Heart left ventricle (tissue), 16 donors: ENCODE measurements at regions of chr3 and their contacts with region 1.

Region 1: GRCh38 chr3:134373994-134374790 is at the start of gene AMOTL2:
- DNase-seq: peak; percentile 92
- ATAC-seq: peak; percentile 62 to 85 (median 82)
- H3K4me3 ChIP-seq: peak within 1 kb of the TSS; percentile 61 to 98 (median 76)
- H3K27ac ChIP-seq: peak within 1 kb of the TSS; percentile 96 to 100 (median 98)
- H3K4me1 ChIP-seq: peaks cover 21 to 63% (median 47%) of the 10 kb centered on the region in 12 donors
- H3K27me3 ChIP-seq: peaks cover 0 to 17% (median 0%) of the 10 kb centered on the region in 9 donors
- CTCF ChIP-seq: no peak
- POLR2A ChIP-seq: peak in 1 of 2 donors; percentile 96
- total RNA-seq, gene AMOTL2: 26.0 to 109 (median 50.0) TPM

Region 2: GRCh38 chr3:134197681-134198261 is 176.4 kb before region 1 on chr3:
- intact Hi-C with region 1: loop called in 1 of 10 experiments (anchors 5 kb)
- DNase-seq: no peak
- ATAC-seq: peak; percentile 52 to 82 (median 80)
- H3K4me3 ChIP-seq: no peak overlapping the region
- H3K27ac ChIP-seq: no peak overlapping the region
- H3K4me1 ChIP-seq: peaks cover 0 to 8% (median 0%) of the 10 kb centered on the region in 12 donors
- H3K27me3 ChIP-seq: no peaks in the 10 kb centered on the region
- CTCF ChIP-seq: peak; percentile 58 to 84 (median 71)
- POLR2A ChIP-seq: no peak

Region 3: DNA sequence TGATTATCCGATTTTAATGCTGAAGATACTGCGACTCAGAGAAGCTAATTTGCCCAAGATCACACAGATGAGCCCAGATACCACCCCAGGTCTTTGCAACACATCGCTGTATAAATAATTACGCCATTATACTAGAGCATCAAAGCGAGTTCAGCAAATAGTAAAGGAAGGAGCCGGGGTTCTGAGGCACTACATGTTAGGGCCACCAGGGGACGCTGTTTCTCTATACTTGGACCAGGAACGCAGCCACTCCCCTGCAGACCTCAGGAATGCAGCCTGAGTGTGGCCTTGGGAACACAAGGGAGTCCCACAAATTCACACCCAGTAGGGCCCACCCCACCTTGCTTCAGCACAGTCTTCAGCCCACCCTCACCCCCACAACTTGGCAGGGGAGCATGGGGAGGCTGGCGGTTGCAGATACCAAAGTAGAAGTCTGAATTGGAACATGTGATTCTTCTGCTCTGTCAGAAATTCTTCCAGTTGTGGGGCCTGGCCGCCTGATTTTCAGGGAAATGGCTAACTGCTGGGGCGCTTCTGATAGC is 65.8 kb before region 1 on chr3:
- intact Hi-C with region 1: loop called in 9 of 10 experiments (anchors 1 to 5 kb)
- DNase-seq: peak; percentile 75 to 85 (median 81)
- ATAC-seq: peak; percentile 63 to 75 (median 68)
- H3K4me3 ChIP-seq: peak overlapping the region in 4 of 12 donors; percentile 26 to 39 (median 36)
- H3K27ac ChIP-seq: peak overlapping the region in 11 of 12 donors; percentile 19 to 82 (median 72)
- H3K4me1 ChIP-seq: peaks cover 2 to 34% (median 23%) of the 10 kb centered on the region in 12 donors
- H3K27me3 ChIP-seq: peaks cover 0 to 4% (median 0%) of the 10 kb centered on the region in 9 donors
- CTCF ChIP-seq: peak; percentile 97 to 100 (median 99)
- POLR2A ChIP-seq: no peak

Region 4: DNA sequence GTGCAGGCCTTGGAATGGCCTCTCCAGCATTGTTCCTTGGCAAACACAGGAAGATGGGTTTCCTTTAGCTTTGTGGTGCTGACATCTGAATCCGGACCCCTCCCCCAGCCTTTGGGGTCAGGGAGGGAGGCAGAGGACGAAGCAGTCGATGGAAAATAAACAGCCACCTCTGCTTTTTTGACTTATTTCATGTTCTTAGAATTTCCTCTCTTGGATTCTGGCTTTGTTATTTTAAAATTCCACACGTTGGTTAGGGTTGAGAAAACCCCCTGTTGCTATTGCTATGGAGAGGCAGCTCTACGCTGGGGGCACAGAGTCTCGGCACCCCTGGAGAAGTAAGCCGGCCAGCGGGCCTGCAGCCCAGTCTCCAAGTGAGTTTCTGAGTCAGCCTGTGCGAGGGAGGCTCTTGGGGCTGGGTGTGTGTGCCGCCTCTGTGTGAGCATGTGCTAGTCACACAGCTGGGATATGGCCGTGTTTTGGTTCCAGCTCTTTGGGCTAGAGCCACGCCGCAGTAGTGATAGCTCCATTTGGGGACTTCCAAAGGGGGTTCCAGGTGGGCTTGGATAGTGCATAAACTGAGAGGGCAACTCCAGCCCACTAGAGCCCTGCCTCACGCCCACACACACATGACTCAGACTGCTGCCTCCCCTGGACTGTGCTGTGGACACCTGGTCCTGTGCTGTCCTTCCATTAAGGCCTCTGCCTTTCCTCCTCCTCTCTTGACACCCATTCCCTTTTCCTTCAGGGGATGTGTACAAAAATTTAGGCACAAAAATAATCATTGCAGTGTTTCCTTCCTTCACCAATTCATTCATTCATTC is 58.7 kb before region 1 on chr3:
- intact Hi-C with region 1: loop called in 9 of 10 experiments (anchors 1 to 5 kb)
- DNase-seq: peak; percentile 66 to 88 (median 81)
- ATAC-seq: peak; percentile 57 to 74 (median 68)
- H3K4me3 ChIP-seq: no peak overlapping the region
- H3K27ac ChIP-seq: peak overlapping the region; percentile 83 to 99 (median 90)
- H3K4me1 ChIP-seq: peaks cover 17 to 57% (median 39%) of the 10 kb centered on the region in 12 donors
- H3K27me3 ChIP-seq: peaks cover 0 to 12% (median 0%) of the 10 kb centered on the region in 9 donors
- CTCF ChIP-seq: no peak
- POLR2A ChIP-seq: no peak

Region 5: GRCh38 chr3:134357261-134358184 is 16.7 kb before region 1 on chr3:
- intact Hi-C with region 1: no loop called
- DNase-seq: peak in 1 of 5 donors; percentile 42
- ATAC-seq: peak; percentile 12 to 51 (median 39)
- H3K4me3 ChIP-seq: no peak overlapping the region
- H3K27ac ChIP-seq: peak overlapping the region; percentile 34 to 100 (median 71)
- H3K4me1 ChIP-seq: peaks cover 10 to 99% (median 70%) of the 10 kb centered on the region in 12 donors
- H3K27me3 ChIP-seq: no peaks in the 10 kb centered on the region
- CTCF ChIP-seq: no peak
- POLR2A ChIP-seq: no peak

Region 6: GRCh38 chr3:134464064-134464697 is 90.0 kb after region 1 on chr3:
- intact Hi-C with region 1: loop called in 1 of 10 experiments (anchors 5 kb)
- DNase-seq: peak; percentile 52 to 80 (median 66)
- ATAC-seq: peak; percentile 62 to 74 (median 66)
- H3K4me3 ChIP-seq: peak overlapping the region in 2 of 12 donors; percentile 5 to 16
- H3K27ac ChIP-seq: peak overlapping the region in 11 of 12 donors; percentile 8 to 80 (median 73)
- H3K4me1 ChIP-seq: peaks cover 0 to 44% (median 23%) of the 10 kb centered on the region in 12 donors
- H3K27me3 ChIP-seq: no peaks in the 10 kb centered on the region
- CTCF ChIP-seq: no peak
- POLR2A ChIP-seq: no peak

Region 7: GRCh38 chr3:134473868-134474546 is 99.8 kb after region 1 on chr3:
- intact Hi-C with region 1: loop called in 9 of 10 experiments (anchors 2 to 5 kb)
- DNase-seq: peak in 4 of 5 donors; percentile 60 to 77 (median 76)
- ATAC-seq: peak in 3 of 4 donors; percentile 39 to 64 (median 39)
- H3K4me3 ChIP-seq: no peak overlapping the region
- H3K27ac ChIP-seq: no peak overlapping the region
- H3K4me1 ChIP-seq: peaks cover 0 to 33% (median 8%) of the 10 kb centered on the region in 12 donors
- H3K27me3 ChIP-seq: no peaks in the 10 kb centered on the region
- CTCF ChIP-seq: peak; percentile 72 to 89 (median 84)
- POLR2A ChIP-seq: no peak